GM23248 (cell line): ENCODE measurements at regions of chr1 and their contacts with region 1.

Region 1: GRCh38 chr1:86499987-86500593 is 31.4 kb downstream of the CLCA1 start:
- DNase-seq: peak; percentile 90
- H3K4me3 ChIP-seq: no peak overlapping the region
- H3K27ac ChIP-seq: no peak overlapping the region
- H3K4me1 ChIP-seq: peaks cover 4% of the 10 kb centered on the region
- H3K27me3 ChIP-seq: no peaks in the 10 kb centered on the region

Region 2: GRCh38 chr1:86380257-86380861 is 119.7 kb before region 1 on chr1:
- in situ Hi-C with region 1: loop called (anchors 10 kb)
- DNase-seq: peak; percentile 75
- H3K4me3 ChIP-seq: peak overlapping the region; percentile 61
- H3K27ac ChIP-seq: 0 out of 2 replicates have a peak overlapping the region, but pooled peaks have one; percentile 8
- H3K4me1 ChIP-seq: peaks cover 19% of the 10 kb centered on the region
- H3K27me3 ChIP-seq: no peaks in the 10 kb centered on the region

Region 3: DNA sequence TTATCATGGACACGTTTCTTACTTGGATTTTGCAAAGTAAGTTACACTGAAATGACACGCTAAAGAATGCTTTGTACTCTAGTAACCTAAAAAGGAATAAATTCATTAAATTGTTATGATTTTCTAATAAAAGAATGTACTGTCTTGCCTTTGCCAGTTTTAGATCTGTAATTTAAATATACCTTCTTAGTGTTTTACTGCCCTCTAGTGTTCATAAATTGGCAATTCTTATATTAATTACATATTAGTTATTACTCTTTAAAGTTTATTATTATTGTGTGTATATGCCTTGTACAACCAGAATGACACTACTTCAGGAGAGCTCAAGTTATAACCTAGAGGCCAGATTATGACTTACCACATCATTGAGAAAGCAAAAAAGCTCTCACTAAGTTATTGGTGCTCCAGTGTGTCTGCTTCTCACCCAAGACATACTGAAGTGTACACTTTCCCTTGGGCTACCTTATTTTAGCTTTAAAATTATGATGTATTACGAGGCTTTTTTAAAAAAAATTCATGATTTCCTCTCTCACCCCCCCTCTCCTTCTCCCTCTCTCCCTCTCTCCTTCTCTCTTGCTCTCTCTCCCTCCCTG is 584.2 kb after region 1 on chr1:
- in situ Hi-C with region 1: loop called (anchors 25 kb)
- DNase-seq: peak; percentile 64
- H3K4me3 ChIP-seq: no peak overlapping the region
- H3K27ac ChIP-seq: no peak overlapping the region
- H3K4me1 ChIP-seq: peaks cover 6% of the 10 kb centered on the region; the same call in 1 of the 2 replicates
- H3K27me3 ChIP-seq: no peaks in the 10 kb centered on the region